Caco-2 (cell line): ENCODE measurements at regions of chr2 and their contacts with region 1.

Region 1: DNA sequence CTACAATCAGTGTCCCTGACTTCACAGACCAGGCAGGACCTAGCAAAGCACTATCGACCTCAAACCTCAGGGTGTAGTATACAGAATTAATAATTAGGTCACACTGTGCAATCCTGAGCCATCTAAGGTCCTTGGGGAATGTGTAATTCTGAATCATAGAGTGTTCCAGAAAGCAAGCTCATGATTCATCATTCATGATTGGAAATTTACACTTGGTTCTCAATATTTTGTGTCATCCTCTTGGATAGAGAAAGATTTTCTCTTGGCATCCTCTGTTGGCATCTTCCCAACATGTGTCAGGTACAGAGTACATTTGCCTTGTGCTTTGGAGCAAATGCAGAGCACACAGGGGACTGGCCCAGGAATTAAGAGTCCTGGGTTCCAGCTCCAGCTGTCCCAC is 245.0 kb upstream of the NT5C1B start:
- DNase-seq: no peak
- H3K4me3 ChIP-seq: no peak overlapping the region
- H3K4me3 Mint-ChIP-seq: no peak overlapping the region
- H3K27ac Mint-ChIP-seq: no peak overlapping the region
- H3K4me1 ChIP-seq: peaks cover 47% of the 10 kb centered on the region
- H3K4me1 Mint-ChIP-seq: peaks cover 30% of the 10 kb centered on the region
- H3K27me3 ChIP-seq: no peaks in the 10 kb centered on the region
- H3K27me3 Mint-ChIP-seq: no peaks in the 10 kb centered on the region
- CTCF ChIP-seq: no peak

Region 2: GRCh38 chr2:18824261-18824790 is 10.0 kb before region 1 on chr2:
- CTCF ChIA-PET with region 1: no interaction called
- POLR2A ChIA-PET with region 1: no interaction called
- intact Hi-C with region 1: loop called (anchors 1 kb)
- DNase-seq: peak; percentile 69 to 76
- H3K4me3 ChIP-seq: no peak overlapping the region
- H3K4me3 Mint-ChIP-seq: no peak overlapping the region
- H3K27ac Mint-ChIP-seq: no peak overlapping the region
- H3K4me1 ChIP-seq: peaks cover 39% of the 10 kb centered on the region
- H3K4me1 Mint-ChIP-seq: peaks cover 25% of the 10 kb centered on the region
- H3K27me3 ChIP-seq: no peaks in the 10 kb centered on the region
- H3K27me3 Mint-ChIP-seq: no peaks in the 10 kb centered on the region
- CTCF ChIP-seq: no peak